ENCODE measurements at regions of chr6 and their contacts with region 1.

Region 1: GRCh38 chr6:84428300-84428907 is 201.0 kb upstream of the CEP162 start:
- DNase-seq: peak; percentile 45
- ATAC-seq: peak; percentile 46
- H3K4me3 ChIP-seq: no peak overlapping the region
- H3K27ac ChIP-seq: no peak overlapping the region
- H3K4me1 ChIP-seq: no peaks in the 10 kb centered on the region
- H3K27me3 ChIP-seq: peaks cover 7% of the 10 kb centered on the region
- CTCF ChIP-seq: peak; percentile 78
- POLR2A ChIP-seq: no peak
- RAD21 ChIP-seq: peak; percentile 82

Region 2: DNA sequence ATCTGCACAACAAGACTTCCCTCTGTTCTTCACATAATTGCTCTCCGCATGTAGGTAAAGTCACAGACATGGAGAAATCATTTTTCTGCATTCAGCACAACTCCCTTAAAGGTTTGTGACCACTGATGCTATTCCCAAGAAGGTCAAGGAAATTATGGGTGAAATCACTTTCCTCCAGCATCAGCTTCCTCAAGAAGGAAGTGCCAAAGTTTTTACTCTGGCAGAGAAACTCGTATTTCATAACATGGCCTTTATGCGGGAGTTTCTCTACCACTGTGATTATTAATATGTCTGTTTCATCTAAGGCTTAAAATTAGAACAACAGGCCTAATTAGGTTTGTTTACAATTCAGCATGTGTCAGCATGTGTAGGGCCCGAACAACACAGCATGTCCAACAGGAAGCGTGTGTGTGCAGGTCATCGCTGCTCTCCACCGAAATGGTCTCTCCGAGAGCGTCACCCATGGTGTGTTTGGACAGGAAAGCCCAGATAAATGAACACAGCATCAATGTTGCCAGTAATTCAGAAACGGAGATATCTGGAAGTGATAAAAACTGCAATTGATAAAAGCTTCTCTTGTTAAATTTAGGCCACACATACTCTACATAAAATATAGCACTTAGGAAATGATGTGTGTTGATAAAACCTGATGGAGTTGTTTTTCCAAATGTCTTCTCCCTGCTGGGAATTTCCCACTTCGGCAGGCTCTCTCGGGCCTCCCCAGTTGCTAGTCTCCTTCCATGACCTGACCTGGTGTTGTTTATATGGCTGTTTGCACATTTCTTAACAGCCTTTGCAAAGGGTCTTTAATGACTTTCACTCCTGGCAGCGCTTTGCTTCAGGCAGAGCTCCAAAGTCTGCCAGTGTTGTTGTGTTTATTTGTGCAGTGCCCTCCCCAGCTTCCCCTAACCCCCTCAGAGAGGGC is 64.1 kb after region 1 on chr6:
- CTCF ChIA-PET with region 1: no interaction called
- POLR2A ChIA-PET with region 1: no interaction called
- dilution Hi-C with region 1: no loop called
- in situ Hi-C with region 1: no loop called
- intact Hi-C with region 1: no loop called
- DNase-seq: no peak
- ATAC-seq: no peak
- H3K4me3 ChIP-seq: no peak overlapping the region
- H3K27ac ChIP-seq: no peak overlapping the region
- H3K4me1 ChIP-seq: no peaks in the 10 kb centered on the region
- H3K27me3 ChIP-seq: no peaks in the 10 kb centered on the region
- CTCF ChIP-seq: no peak
- POLR2A ChIP-seq: no peak
- RAD21 ChIP-seq: no peak

Region 3: DNA sequence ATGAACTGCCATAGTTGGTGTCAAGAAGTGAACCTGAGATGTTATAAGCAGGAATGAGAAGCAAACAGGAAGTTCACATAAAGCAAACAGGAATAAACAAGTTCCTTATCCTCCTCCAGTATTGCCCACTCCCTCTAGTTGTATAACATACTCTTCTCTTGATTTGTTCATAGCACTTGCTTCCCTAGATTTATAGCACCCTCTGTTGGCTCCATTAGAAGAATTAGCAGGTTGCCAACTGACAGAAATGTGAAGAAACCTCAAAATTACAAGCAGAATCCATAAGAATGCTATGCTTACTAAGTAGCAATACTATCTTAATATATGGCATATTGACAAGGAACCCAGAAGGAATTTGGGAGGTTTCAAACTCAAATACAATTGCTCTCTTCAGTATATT is 140.6 kb after region 1 on chr6:
- CTCF ChIA-PET with region 1: no interaction called
- POLR2A ChIA-PET with region 1: no interaction called
- dilution Hi-C with region 1: no loop called
- in situ Hi-C with region 1: no loop called
- intact Hi-C with region 1: loop called (anchors 1 kb)
- DNase-seq: peak; percentile 7
- ATAC-seq: no peak
- H3K4me3 ChIP-seq: no peak overlapping the region
- H3K27ac ChIP-seq: no peak overlapping the region
- H3K4me1 ChIP-seq: no peaks in the 10 kb centered on the region
- H3K27me3 ChIP-seq: no peaks in the 10 kb centered on the region
- CTCF ChIP-seq: peak; percentile 20; the same call in 1 of the 2 replicates
- POLR2A ChIP-seq: no peak
- RAD21 ChIP-seq: no peak

Region 4: DNA sequence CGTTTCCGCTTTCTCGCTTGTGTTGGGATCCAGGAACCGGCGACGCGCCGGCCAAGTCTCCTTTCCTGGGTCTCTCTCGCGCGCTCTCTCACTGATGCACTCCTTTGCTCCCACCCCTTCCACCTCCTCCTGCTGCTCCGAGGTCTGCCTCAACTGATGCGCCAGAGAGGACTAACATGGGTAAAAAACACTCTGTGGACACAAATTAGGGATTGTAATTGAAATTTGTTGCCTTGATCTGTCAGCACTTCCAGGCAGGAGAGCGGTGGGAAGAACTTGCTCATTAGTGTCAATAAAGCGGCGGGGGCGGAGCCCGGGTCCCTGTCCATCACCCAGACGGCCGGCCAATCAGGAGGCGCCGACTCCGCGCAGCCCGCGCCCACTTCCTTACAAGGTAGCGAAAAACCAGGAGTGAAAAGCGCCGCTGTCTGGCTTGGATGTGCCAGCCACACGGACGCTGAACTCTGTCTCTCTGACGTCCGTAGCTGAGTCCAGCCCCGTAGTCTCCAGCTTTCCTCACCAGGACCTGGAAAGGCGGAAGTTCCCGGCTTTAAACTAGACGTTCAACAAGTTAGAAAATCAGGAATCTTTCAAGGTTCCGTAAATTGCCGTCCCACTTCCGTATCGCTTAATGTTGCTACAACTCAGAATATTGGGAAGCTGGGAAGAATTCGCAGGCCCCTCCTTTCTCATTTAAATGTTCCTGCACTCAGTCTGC is 336.1 kb after region 1 on chr6 and contains the start of gene TBX18:
- CTCF ChIA-PET with region 1: no interaction called
- POLR2A ChIA-PET with region 1: no interaction called
- dilution Hi-C with region 1: no loop called
- in situ Hi-C with region 1: loop called (anchors 10 kb)
- intact Hi-C with region 1: no loop called
- DNase-seq: peak; percentile 88
- ATAC-seq: peak; percentile 95
- H3K4me3 ChIP-seq: peak within 1 kb of the TSS; percentile 53
- H3K27ac ChIP-seq: no peak within 1 kb of the TSS
- H3K4me1 ChIP-seq: no peaks in the 10 kb centered on the region
- H3K27me3 ChIP-seq: peaks cover 65% of the 10 kb centered on the region
- CTCF ChIP-seq: no peak
- POLR2A ChIP-seq: no peak
- RAD21 ChIP-seq: no peak
- total RNA-seq, gene TBX18: 0.83 and 1.3 TPM in 2 replicates

Region 5: GRCh38 chr6:84774157-84774984 is 346.0 kb after region 1 on chr6:
- CTCF ChIA-PET with region 1: interaction called, 3 read pairs
- POLR2A ChIA-PET with region 1: no interaction called
- dilution Hi-C with region 1: no loop called
- in situ Hi-C with region 1: loop called (anchors 10 kb)
- intact Hi-C with region 1: loop called (anchors 1 kb)
- DNase-seq: no peak
- ATAC-seq: peak; percentile 72
- H3K4me3 ChIP-seq: no peak overlapping the region
- H3K27ac ChIP-seq: no peak overlapping the region
- H3K4me1 ChIP-seq: no peaks in the 10 kb centered on the region
- H3K27me3 ChIP-seq: peaks cover 55% of the 10 kb centered on the region
- CTCF ChIP-seq: peak; percentile 61
- POLR2A ChIP-seq: no peak
- RAD21 ChIP-seq: peak; percentile 62

Region 6: DNA sequence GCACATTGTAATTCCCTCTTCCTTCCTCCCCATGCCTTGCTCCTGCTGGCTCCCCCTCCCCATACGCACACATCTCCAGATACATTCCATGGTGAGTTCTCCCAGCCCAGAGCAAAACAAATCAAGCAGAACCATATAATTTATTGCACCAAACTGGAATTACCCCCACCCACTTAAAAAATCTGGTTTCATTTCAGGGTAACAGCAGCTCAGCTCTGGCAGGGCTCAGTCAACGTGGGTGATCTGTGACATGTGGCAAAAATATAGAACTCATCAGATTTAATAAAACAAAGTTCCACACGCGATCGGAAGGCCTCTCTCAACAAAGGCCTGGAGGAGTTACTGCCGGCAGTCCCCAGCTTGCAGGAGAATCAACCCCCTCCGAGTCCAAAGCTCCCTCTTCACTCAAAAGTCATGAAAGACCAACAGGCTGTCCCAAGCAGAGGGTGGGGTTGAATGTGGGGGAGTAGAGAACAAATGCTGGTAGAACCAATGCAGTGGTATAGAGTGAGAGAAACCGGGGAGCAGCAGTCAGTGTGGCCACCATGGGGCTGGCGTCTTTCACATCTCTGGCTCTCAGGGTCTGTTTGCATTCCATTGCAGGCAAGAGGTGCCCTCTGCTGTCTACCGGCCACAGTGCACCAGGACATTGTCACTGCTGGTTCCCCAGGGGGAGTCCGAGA is 698.2 kb after region 1 on chr6:
- CTCF ChIA-PET with region 1: no interaction called
- POLR2A ChIA-PET with region 1: no interaction called
- dilution Hi-C with region 1: no loop called
- in situ Hi-C with region 1: no loop called
- intact Hi-C with region 1: loop called (anchors 10 kb)
- DNase-seq: peak; percentile 2
- ATAC-seq: peak; percentile 75
- H3K4me3 ChIP-seq: no peak overlapping the region
- H3K27ac ChIP-seq: no peak overlapping the region
- H3K4me1 ChIP-seq: no peaks in the 10 kb centered on the region
- H3K27me3 ChIP-seq: no peaks in the 10 kb centered on the region
- CTCF ChIP-seq: peak; percentile 39
- POLR2A ChIP-seq: no peak
- RAD21 ChIP-seq: peak; percentile 54